ENCODE measurements at regions of chr16 and their contacts with region 1.

Region 1: DNA sequence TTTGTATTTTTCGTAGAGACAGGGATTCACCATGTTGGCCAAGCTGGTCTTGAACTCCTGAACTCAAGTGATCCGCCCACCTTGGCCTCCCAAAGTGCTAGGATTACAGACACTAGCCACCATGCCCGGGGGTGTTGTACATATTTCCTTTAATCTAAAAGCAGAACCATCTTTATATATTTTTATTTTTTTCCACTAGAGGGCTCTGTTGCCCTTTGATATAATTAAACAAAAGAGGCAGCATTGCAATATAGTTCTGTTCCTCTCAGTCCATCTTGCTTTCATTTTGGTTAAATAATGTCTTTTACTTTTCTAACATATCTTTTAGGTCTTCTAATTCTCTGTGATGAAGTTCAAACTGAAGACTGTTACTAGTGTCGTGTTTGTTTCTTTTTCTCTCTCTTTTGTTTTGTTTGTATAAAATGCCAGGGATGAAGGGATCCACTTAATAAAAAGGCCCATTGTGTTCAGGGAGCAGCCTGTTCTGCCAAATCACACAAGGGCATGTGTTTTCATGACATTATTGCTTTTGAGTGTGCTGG is 23.4 kb downstream of the WWOX start:
- DNase-seq: peak; percentile 33
- ATAC-seq: peak; percentile 65
- H3K4me3 Mint-ChIP-seq: no peak overlapping the region
- H3K27ac Mint-ChIP-seq: no peak overlapping the region
- H3K4me1 Mint-ChIP-seq: peaks cover 5% of the 10 kb centered on the region
- H3K27me3 Mint-ChIP-seq: no peaks in the 10 kb centered on the region

Region 2: DNA sequence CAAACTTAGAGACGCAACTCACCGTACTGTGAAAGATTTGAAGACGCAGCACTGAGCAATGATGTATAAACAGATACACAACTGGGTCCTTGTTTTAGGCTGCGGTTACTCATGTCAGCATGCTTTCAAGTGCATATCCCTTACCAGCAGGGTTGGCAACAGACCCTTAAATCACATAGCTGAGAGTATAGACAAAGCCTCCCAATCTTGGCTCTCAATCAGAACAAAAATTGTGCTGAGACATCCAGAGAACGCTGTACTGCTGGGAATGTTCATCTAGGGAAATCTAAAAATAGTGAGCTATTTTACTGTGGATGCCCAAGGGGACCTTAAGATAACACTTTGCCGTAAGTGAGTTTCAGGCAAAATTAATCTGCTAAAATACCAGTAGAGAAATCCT is 484.9 kb before region 1 on chr16:
- CTCF ChIA-PET with region 1: no interaction called
- POLR2A ChIA-PET with region 1: no interaction called
- intact Hi-C with region 1: no loop called
- DNase-seq: no peak
- ATAC-seq: no peak
- H3K4me3 Mint-ChIP-seq: no peak overlapping the region
- H3K27ac Mint-ChIP-seq: no peak overlapping the region
- H3K4me1 Mint-ChIP-seq: no peaks in the 10 kb centered on the region
- H3K27me3 Mint-ChIP-seq: peaks cover 8% of the 10 kb centered on the region

Region 3: DNA sequence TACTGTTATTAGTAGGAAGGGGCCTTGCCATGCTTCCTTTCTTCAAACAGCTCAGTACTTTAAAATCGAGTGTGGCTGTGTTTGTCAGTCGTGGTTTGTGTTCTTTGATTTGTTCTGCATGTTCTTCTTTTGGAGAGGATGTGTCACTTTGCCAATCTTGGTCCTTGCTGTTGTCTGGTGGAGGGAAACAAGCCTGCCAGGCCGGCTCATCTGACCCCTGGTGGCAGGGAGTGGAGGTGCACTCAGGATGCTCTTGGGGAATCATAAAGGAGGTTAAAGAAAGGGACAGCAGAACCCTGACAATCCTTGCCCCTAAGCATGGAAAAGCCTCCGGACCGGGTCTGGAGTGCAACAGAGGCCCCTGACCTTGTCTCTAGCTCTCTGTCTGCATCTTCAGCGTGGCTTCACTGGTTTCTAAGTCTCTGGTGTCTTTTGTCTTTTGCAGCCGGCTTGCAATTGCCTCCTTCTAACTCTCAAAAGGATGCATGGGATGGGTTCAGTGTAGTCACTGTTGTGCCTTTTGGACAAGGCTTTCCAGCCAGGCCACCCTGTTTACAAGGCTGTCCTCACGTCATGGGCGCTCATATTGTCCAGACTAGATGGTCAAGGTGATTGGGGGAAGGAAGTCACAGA is 112.4 kb after region 1 on chr16:
- CTCF ChIA-PET with region 1: interaction called, 21 read pairs
- POLR2A ChIA-PET with region 1: no interaction called
- intact Hi-C with region 1: loop called (anchors 1 kb)
- DNase-seq: peak; percentile 81
- ATAC-seq: peak; percentile 84
- H3K4me3 Mint-ChIP-seq: no peak overlapping the region
- H3K27ac Mint-ChIP-seq: no peak overlapping the region
- H3K4me1 Mint-ChIP-seq: peaks cover 2% of the 10 kb centered on the region
- H3K27me3 Mint-ChIP-seq: no peaks in the 10 kb centered on the region